ENCODE measurements at regions of chr2 and their contacts with region 1.

Region 1: GRCh38 chr2:17672583-17673317 is 80.9 kb downstream of the SMC6 start:
- DNase-seq: no peak
- ATAC-seq: peak; percentile 73
- H3K4me3 ChIP-seq: no peak overlapping the region
- H3K27ac ChIP-seq: no peak overlapping the region
- H3K4me1 ChIP-seq: no peaks in the 10 kb centered on the region
- H3K27me3 ChIP-seq: no peaks in the 10 kb centered on the region
- CTCF ChIP-seq: no peak
- EP300 ChIP-seq: no peak
- POLR2A ChIP-seq: no peak
- RAD21 ChIP-seq: no peak

Region 2: GRCh38 chr2:16773080-16773713 is 899.6 kb before region 1 on chr2:
- CTCF ChIA-PET with region 1: interaction called, 3 read pairs
- POLR2A ChIA-PET with region 1: no interaction called
- RAD21 ChIA-PET with region 1: no interaction called
- SMC1A ChIA-PET with region 1: no interaction called
- in situ Hi-C with region 1: loop called (anchors 10 kb)
- intact Hi-C with region 1: loop called (anchors 5 kb)
- DNase-seq: no peak
- ATAC-seq: peak; percentile 90
- H3K4me3 ChIP-seq: no peak overlapping the region
- H3K27ac ChIP-seq: no peak overlapping the region
- H3K4me1 ChIP-seq: no peaks in the 10 kb centered on the region
- H3K27me3 ChIP-seq: peaks cover 3 to 5% of the 10 kb centered on the region in 2 experiments; a peak in 2 of 4 replicates
- CTCF ChIP-seq: peak; percentile 47 to 73 (median 52); a peak in 5 of 6 replicates
- EP300 ChIP-seq: no peak
- POLR2A ChIP-seq: no peak
- RAD21 ChIP-seq: peak; percentile 81

Region 3: DNA sequence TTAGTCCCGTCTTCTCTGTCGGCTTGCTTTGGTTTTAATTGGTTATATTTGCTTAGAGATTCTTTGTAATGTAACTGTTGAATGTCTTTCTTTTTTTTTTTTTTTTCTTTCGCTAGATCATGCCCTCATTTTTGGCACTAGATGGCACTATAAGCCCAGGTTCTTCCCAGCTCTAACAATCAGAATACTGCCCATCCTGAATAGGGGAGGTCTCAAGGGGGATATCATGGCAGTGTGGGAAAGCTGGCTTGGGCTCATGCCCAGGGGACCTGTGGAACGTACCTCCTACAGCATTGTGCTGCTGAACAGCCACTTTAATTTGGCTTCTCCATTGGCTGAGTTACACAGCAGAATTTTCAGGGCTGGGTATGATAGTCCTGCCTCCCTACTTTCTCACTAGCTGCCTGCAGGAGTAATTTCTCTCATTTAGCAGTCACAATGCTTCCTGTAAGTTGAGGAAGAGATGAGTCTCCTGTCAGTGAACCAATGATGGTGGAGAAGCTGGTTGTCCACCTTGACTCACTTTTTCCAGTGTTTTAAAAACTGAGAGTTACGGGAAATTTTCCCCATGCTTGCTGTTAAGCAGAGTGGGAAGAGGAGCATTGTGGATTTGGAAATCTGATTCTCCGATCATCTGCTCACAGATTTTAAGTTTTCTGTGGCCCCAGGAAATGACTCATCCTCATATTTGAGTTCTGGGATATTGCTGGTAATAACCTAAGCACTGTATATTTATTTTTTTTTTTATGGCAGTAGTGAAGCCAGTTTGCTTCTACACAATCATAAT is 201.7 kb before region 1 on chr2:
- CTCF ChIA-PET with region 1: interaction called, 112 read pairs
- POLR2A ChIA-PET with region 1: interaction called, 4 read pairs
- RAD21 ChIA-PET with region 1: interaction called, 52 read pairs
- SMC1A ChIA-PET with region 1: interaction called, 38 read pairs
- in situ Hi-C with region 1: loop called (anchors 5 kb)
- intact Hi-C with region 1: loop called (anchors 1 kb)
- DNase-seq: peak; percentile 4
- ATAC-seq: peak; percentile 78
- H3K4me3 ChIP-seq: no peak overlapping the region
- H3K27ac ChIP-seq: no peak overlapping the region
- H3K4me1 ChIP-seq: no peaks in the 10 kb centered on the region
- H3K27me3 ChIP-seq: no peaks in the 10 kb centered on the region
- CTCF ChIP-seq: peak; percentile 36 to 50 (median 47)
- EP300 ChIP-seq: no peak
- POLR2A ChIP-seq: no peak
- RAD21 ChIP-seq: peak; percentile 82

Region 4: GRCh38 chr2:17518212-17519154 is 154.3 kb before region 1 on chr2 and contains the start of gene RAD51AP2:
- CTCF ChIA-PET with region 1: interaction called, 3 read pairs
- POLR2A ChIA-PET with region 1: no interaction called
- RAD21 ChIA-PET with region 1: interaction called, 11 read pairs
- SMC1A ChIA-PET with region 1: interaction called, 4 read pairs
- in situ Hi-C with region 1: no loop called
- intact Hi-C with region 1: no loop called
- DNase-seq: peak; percentile 40
- ATAC-seq: peak; percentile 93
- H3K4me3 ChIP-seq: peak within 1 kb of the TSS; percentile 61; the same call in 1 of the 2 replicates
- H3K27ac ChIP-seq: peak within 1 kb of the TSS; percentile 6; the same call in 1 of the 2 replicates
- H3K4me1 ChIP-seq: peaks cover 10% of the 10 kb centered on the region; the same call in 1 of the 2 replicates
- H3K27me3 ChIP-seq: no peaks in the 10 kb centered on the region
- CTCF ChIP-seq: no peak; a peak in 1 of 6 replicates
- EP300 ChIP-seq: no peak
- POLR2A ChIP-seq: peak; percentile 54; the same call in 1 of the 2 replicates
- RAD21 ChIP-seq: no peak
- polyA plus RNA-seq, gene RAD51AP2: 0.02 TPM in 1 of 2 experiments, not detected in the other

Region 5: GRCh38 chr2:17646081-17646554 is 26.6 kb before region 1 on chr2:
- CTCF ChIA-PET with region 1: interaction called, 604 read pairs
- POLR2A ChIA-PET with region 1: interaction called, 3 read pairs
- RAD21 ChIA-PET with region 1: interaction called, 138 read pairs
- SMC1A ChIA-PET with region 1: interaction called, 165 read pairs
- in situ Hi-C with region 1: no loop called
- intact Hi-C with region 1: loop called (anchors 1 kb)
- DNase-seq: peak; percentile 45
- ATAC-seq: peak; percentile 88
- H3K4me3 ChIP-seq: no peak overlapping the region
- H3K27ac ChIP-seq: no peak overlapping the region
- H3K4me1 ChIP-seq: peaks cover 3% of the 10 kb centered on the region
- H3K27me3 ChIP-seq: no peaks in the 10 kb centered on the region
- CTCF ChIP-seq: peak; percentile 75 to 88 (median 87); a peak in 4 of 6 replicates
- EP300 ChIP-seq: 0 out of 4 replicates have a peak, but pooled peaks of 1 of the 2 experiments have one; percentile 15
- POLR2A ChIP-seq: no peak
- RAD21 ChIP-seq: peak; percentile 79

Region 6: GRCh38 chr2:17709897-17710296 is 37.1 kb after region 1 on chr2:
- CTCF ChIA-PET with region 1: interaction called, 10 read pairs
- POLR2A ChIA-PET with region 1: no interaction called
- RAD21 ChIA-PET with region 1: interaction called, 6 read pairs
- SMC1A ChIA-PET with region 1: interaction called, 6 read pairs
- in situ Hi-C with region 1: no loop called
- intact Hi-C with region 1: no loop called
- DNase-seq: no peak
- ATAC-seq: no peak
- H3K4me3 ChIP-seq: no peak overlapping the region
- H3K27ac ChIP-seq: no peak overlapping the region
- H3K4me1 ChIP-seq: no peaks in the 10 kb centered on the region
- H3K27me3 ChIP-seq: no peaks in the 10 kb centered on the region
- CTCF ChIP-seq: no peak
- EP300 ChIP-seq: no peak
- POLR2A ChIP-seq: no peak
- RAD21 ChIP-seq: no peak

Region 7: GRCh38 chr2:17786727-17787126 is 114.0 kb after region 1 on chr2:
- CTCF ChIA-PET with region 1: no interaction called
- POLR2A ChIA-PET with region 1: no interaction called
- RAD21 ChIA-PET with region 1: no interaction called
- SMC1A ChIA-PET with region 1: no interaction called
- in situ Hi-C with region 1: no loop called
- intact Hi-C with region 1: no loop called
- DNase-seq: no peak
- ATAC-seq: no peak
- H3K4me3 ChIP-seq: no peak overlapping the region
- H3K27ac ChIP-seq: no peak overlapping the region
- H3K4me1 ChIP-seq: no peaks in the 10 kb centered on the region
- H3K27me3 ChIP-seq: no peaks in the 10 kb centered on the region
- CTCF ChIP-seq: no peak
- EP300 ChIP-seq: no peak
- POLR2A ChIP-seq: peak; percentile 22; the same call in 1 of the 2 replicates
- RAD21 ChIP-seq: no peak

Measured in GM12878 (cell line).